Pancreas (tissue), 10 donors: ENCODE measurements at regions of chr1 and their contacts with region 1.

Region 1: DNA sequence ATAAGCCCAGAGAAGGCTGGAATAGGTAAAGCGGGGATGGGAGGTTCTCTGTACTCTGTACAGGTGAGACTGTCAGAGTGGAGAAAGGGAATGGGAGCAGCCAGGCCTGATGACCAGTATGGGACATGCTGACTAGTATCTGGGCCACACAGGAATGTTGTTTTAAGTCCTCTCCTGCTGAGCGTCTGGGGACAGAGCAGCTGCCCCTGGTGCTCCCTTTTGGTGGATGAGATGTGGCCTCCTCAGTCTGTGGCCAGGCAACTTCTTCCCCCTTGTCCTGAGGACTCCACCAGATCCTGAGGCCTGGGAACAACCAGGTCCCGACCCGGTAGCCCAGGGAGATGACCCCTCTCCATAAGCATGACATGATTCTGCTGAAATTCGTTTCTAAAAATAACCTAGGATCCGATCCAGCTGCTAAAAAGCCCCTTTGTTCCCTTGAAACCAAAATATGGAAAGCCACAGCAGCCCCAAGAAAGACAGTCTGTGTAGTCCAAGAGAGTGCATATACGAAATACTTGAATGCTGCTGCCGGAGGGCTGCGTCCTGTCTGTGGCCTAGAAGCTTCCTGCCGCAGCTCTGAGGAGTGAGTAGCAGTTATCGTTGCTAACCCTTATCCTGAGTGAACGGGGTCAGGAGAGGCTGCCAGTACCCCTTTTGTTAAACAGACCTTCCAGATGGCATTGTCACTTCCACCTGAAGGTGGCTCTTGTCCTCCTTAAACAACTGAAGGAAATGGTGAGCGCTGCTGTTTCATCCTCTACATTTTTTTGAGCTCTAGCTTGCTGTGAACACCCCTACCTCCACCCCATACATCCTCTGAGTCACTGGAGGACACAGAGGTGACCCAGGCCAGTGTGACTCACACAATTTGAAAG is 47.2 kb downstream of the ATP2B4 start:
- DNase-seq: peak in 1 of 6 donors; percentile 34
- ATAC-seq: peak in 3 of 4 donors; percentile 37 to 49 (median 39)
- H3K4me3 ChIP-seq: no peak overlapping the region
- H3K27ac ChIP-seq: peak overlapping the region in 3 of 4 donors; percentile 25 to 58 (median 36)
- H3K4me1 ChIP-seq: peaks cover 0 to 26% (median 4%) of the 10 kb centered on the region in 3 donors
- H3K27me3 ChIP-seq: no peaks in the 10 kb centered on the region
- CTCF ChIP-seq: no peak

Region 2: DNA sequence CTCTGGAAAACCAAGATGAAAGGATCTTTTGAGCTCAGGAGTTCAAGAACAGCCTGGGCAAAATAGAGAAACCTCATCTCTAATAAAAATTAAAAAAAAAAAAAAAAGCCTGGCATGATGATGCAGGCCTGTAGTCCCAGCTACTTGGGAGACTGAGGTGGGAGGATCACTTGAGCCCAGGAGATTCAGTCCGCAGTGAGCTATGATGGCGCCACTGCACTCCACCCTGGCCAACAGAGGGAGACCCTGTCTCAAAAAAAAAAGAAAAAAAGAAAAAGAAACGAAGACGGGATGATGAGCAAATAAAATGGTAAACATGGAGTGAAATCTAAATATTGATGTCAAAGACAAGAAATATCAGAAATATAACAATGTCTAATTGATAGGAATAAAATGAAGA is 15.5 kb before region 1 on chr1:
- intact Hi-C with region 1: loop called in 1 of 3 experiments (anchors 2 kb)
- DNase-seq: no peak
- ATAC-seq: no peak
- H3K4me3 ChIP-seq: no peak overlapping the region
- H3K27ac ChIP-seq: no peak overlapping the region
- H3K4me1 ChIP-seq: peaks cover 11 to 24% (median 14%) of the 10 kb centered on the region in 3 donors
- H3K27me3 ChIP-seq: no peaks in the 10 kb centered on the region
- CTCF ChIP-seq: no peak

Region 3: GRCh38 chr1:203776636-203777035 is 102.8 kb after region 1 on chr1:
- intact Hi-C with region 1: no loop called
- DNase-seq: no peak
- ATAC-seq: peak in 3 of 4 donors; percentile 40 to 75 (median 60)
- H3K4me3 ChIP-seq: no peak overlapping the region
- H3K27ac ChIP-seq: no peak overlapping the region
- H3K4me1 ChIP-seq: no peaks in the 10 kb centered on the region
- H3K27me3 ChIP-seq: no peaks in the 10 kb centered on the region
- CTCF ChIP-seq: no peak

Region 4: GRCh38 chr1:204162231-204163074 is 488.7 kb after region 1 on chr1:
- intact Hi-C with region 1: no loop called
- DNase-seq: peak; percentile 70 to 94 (median 86)
- ATAC-seq: peak; percentile 93 to 99 (median 98)
- H3K4me3 ChIP-seq: no peak overlapping the region
- H3K27ac ChIP-seq: peak overlapping the region in 1 of 4 donors; percentile 7
- H3K4me1 ChIP-seq: no peaks in the 10 kb centered on the region
- H3K27me3 ChIP-seq: no peaks in the 10 kb centered on the region
- CTCF ChIP-seq: peak; percentile 98 to 100 (median 99)